H1 (cell line): ENCODE measurements at regions of chr9 and their contacts with region 1.

Region 1: DNA sequence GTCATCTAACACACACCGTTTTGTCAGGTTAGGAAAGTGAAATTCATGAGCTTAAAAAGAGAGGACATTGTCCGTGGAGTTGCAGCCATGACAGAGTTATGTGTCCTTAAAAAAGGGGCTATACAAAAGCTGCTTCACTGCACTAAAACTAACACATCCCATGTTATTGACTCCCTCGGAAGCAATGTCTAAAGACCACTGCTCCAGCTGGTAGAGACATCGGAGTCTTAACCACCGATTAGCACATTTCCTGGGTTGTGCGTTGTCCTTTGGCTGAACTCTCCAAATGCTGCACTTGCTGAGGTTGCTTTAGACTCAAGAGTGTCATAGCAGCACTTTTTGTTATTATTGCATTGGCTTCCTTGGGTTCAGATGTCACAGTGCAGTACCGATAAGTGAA is 128.3 kb upstream of the C9orf72 start:
- DNase-seq: no peak
- H3K4me3 ChIP-seq: no peak overlapping the region
- H3K27ac ChIP-seq: no peak overlapping the region
- H3K4me1 ChIP-seq: no peaks in the 10 kb centered on the region
- H3K27me3 ChIP-seq: peaks cover 0 to 1% (median 0%) of the 10 kb centered on the region in 4 experiments; a peak in 1 of 7 replicates
- CTCF ChIP-seq: no peak
- EP300 ChIP-seq: no peak
- POLR2A ChIP-seq: no peak
- RAD21 ChIP-seq: no peak

Region 2: DNA sequence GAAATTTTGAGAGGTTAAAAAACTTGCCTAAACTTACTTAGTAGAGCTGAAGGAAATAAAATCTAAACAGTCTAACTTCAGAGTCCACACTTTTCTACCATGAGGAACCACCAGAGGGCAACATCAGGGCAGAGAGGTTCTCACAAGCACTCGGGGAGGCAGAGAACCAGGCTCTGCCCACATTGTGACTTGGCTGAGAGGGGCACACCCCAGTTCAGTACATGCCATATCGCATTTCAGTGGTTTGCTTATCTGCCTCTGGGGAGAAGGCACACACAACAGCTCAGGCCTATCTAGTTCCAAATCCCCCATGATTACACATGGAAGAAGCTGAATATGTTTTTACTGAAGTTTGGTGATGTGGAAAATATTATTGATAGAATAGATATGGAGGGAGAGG is 453.8 kb before region 1 on chr9:
- CTCF ChIA-PET with region 1: no interaction called
- POLR2A ChIA-PET with region 1: no interaction called
- DNase-seq: peak; percentile 25 to 56
- H3K4me3 ChIP-seq: no peak overlapping the region
- H3K27ac ChIP-seq: no peak overlapping the region
- H3K4me1 ChIP-seq: no peaks in the 10 kb centered on the region; a peak in 1 of 7 replicates
- H3K27me3 ChIP-seq: no peaks in the 10 kb centered on the region
- CTCF ChIP-seq: peak; percentile 54 to 88 (median 76)
- EP300 ChIP-seq: no peak
- POLR2A ChIP-seq: no peak
- RAD21 ChIP-seq: peak; percentile 73 to 81

Region 3: DNA sequence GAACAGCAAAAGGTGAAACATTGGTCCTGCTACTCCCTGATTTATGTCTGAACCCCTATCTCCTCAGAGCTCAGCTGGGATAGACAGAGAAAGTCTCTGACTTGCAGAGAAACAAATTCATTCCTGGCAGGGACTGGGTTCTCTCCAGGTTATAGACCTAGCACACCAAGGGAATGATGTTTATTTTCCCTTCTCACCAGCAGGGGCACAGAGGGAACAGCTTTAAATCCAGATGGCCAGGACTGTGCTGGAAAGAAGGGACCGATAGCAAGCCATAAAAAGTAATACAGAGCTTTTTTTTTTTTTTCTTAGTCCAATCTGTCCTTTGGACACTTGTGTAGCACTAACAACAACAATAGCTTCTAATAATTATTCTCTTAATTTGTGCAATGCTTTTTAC is 12.8 kb after region 1 on chr9:
- CTCF ChIA-PET with region 1: interaction called, 19 read pairs
- POLR2A ChIA-PET with region 1: no interaction called
- DNase-seq: no peak
- H3K4me3 ChIP-seq: no peak overlapping the region
- H3K27ac ChIP-seq: no peak overlapping the region
- H3K4me1 ChIP-seq: no peaks in the 10 kb centered on the region
- H3K27me3 ChIP-seq: no peaks in the 10 kb centered on the region
- CTCF ChIP-seq: peak; percentile 14 to 55 (median 34); a peak in 3 of 4 replicates
- EP300 ChIP-seq: no peak
- POLR2A ChIP-seq: no peak
- RAD21 ChIP-seq: peak; percentile 48 to 58